ENCODE measurements at regions of chr19 and their contacts with region 1.

Region 1: DNA sequence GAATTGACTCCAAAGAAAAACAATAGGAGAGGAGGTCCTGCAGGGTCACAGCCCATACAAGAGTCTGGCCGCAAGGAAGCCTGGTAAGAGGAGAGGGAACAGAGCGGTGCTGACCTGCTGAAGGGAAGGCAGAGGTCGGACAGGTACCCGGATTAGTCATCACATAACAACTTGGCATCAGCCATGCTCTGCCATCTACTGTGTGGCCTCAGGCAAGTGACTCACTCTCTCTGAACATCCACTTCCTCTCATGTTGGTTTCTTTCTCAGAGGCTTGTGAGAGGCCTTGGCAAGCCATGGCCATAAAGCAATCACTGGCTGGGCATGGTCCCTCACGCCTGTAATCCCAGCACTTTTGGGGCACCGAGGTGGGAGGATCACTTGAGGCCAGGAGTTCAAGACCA is 7.4 kb upstream of the CAPNS1 start:
- DNase-seq: no peak

Region 2: DNA sequence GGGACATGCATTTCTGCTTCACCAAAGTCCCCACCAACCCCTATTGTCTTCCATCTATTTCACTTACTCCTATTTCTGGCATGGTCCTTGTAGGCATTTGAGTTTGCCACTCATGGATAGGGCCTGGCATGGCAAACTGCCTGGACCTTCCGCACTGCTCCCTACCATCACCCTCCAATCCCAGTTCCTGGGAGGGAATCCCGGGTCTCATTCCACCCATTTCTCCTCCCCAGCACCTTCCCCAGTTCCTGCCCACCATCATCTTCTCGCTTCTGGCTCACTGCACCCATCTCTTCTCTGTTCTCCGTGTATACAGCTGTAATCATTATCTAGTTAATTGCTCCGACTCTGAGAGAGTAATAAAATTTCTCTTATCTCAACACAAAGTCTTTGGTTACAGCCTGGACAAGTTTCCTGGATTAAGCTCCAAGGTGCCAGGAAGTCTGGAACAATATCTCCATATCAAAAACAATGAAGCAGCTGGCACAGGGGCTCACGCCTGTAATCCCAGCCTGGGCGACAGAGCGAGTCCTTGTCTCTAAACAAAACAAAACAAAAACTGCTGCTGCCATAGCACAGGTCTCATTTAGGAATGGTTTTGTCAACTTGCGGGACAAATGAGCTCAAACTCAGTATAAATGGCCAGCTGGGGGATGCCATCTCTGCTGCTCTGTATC is 36.7 kb after region 1 on chr19:
- intact Hi-C with region 1: loop called (anchors 2 to 5 kb)
- DNase-seq: no peak

Measured in posterior vena cava (tissue), 2 donors.